Left ventricle myocardium inferior (tissue), 1 donor: ENCODE measurements at regions of chrX and their contacts with region 1.

Region 1: DNA sequence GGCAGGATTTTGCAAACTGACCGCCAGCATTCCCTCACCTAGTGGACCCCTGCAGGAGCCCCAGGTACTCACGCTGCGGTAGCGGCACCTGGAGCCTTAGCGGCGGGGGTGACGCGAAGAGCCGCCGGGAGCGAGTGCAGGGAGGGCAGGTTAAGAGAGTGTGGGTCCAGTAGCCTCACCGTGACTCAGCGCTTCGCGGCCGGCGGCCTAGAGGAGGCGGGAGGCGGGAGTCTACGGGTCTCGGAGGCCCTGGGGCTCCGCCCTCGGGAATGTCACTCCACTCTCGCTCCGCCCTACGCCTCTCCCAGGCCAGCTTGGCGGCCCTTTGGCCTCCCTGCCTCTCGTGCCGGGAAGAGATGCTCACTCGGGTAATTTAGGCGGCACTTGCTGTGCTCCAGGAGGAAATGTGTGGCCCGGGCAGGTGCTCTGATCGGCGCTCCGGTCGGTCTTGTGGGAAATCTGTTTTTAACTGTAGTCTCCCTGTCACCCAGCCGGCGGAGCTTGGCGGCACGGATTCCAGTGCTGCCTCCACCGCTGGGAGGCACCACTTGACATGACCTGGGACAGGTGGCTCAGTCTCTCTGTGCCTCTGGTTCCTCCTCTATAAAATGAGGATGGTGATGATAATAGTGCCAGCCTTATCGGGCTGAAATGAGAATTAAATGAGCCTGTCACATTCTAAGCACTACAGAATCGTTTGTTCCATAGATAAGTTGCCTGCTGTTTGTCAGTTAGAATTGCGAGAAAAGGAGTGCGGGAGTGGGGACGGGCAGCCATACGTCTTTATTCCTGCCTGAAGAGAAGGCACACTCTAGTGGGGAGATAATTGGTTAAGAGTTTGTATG is at the start of gene PIR:
- DNase-seq: peak; percentile 86
- H3K4me3 ChIP-seq: peak within 1 kb of the TSS; percentile 76
- H3K27ac ChIP-seq: peak within 1 kb of the TSS; percentile 84
- H3K4me1 ChIP-seq: peaks cover 12% of the 10 kb centered on the region
- H3K27me3 ChIP-seq: no peaks in the 10 kb centered on the region
- CTCF ChIP-seq: peak; percentile 47
- total RNA-seq, gene PIR: 13.0 TPM

Region 2: DNA sequence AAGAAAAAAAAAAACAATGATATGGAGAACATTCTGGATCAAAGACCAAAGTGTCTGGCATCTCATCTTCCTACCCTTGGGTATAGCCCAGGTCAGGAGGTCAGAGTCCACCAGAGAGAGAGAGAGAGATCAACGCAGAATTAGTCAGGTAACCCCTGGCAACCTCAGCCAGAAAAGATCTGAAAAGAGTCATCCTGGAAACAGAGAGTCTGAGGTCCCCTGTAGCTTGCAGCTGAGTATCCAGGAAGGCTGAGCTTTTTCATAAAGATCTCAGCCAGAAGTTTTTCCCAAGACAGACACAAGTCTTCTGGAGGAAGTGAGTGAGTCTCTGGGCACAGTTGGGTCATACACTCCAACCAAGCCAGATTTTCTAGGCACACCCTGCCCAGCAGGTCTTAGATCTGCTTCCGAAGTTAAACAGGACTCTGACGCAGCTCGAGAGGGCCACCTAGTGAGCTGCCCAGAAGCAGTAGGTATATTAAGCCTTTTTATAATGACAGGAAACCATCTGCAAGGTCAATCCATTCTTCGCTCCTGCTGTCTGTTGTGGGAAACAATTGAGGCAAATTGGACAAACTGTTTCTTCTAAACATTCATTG is 71.7 kb after region 1 on chrX:
- intact Hi-C with region 1: loop called (anchors 10 kb)
- DNase-seq: peak; percentile 40
- H3K4me3 ChIP-seq: no peak overlapping the region
- H3K27ac ChIP-seq: no peak overlapping the region
- H3K4me1 ChIP-seq: peaks cover 4% of the 10 kb centered on the region
- H3K27me3 ChIP-seq: no peaks in the 10 kb centered on the region
- CTCF ChIP-seq: peak; percentile 66